MCF 10A (cell line): ENCODE measurements at regions of chr2 and their contacts with region 1.

Region 1: DNA sequence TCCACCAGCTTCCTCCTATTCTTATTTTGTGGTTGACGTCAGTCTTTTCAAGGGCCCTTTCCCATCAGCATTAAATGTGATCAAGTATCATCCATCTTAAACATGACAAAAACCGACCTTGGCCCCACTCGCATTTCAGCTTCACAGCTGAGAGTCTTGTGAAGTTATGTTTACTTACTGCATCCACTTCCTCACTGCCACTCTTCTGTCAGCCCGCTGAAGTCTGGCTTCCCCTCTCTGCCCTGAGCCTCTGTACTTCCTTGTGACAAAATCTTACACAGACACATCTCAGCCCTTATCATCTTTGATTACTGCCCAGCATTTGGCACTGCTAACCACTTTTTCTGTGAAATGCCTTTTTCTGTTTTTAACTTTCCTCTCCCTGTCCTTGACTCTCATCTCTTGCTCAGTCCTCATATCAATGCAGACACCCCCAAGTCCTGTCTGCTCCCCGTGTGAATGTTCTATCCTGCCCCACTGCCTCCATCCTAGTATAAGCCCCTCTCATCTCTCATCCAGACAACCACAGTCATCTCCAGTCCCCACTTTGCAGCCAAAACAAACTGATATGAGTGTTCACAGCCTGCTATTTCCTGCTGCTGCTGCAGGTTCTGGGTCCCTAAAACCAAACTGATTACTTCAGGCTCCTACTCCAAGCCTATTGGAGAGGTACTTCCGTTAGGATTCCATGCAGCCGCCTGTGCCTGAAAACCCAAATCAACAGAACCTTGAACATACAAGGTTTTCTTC is 31.4 kb downstream of the FOSL2 start:
- DNase-seq: no peak
- H3K4me3 Mint-ChIP-seq: no peak overlapping the region
- H3K27ac Mint-ChIP-seq: no peak overlapping the region
- H3K4me1 Mint-ChIP-seq: peaks cover 7% of the 10 kb centered on the region
- H3K27me3 Mint-ChIP-seq: no peaks in the 10 kb centered on the region
- CTCF ChIP-seq: no peak

Region 2: DNA sequence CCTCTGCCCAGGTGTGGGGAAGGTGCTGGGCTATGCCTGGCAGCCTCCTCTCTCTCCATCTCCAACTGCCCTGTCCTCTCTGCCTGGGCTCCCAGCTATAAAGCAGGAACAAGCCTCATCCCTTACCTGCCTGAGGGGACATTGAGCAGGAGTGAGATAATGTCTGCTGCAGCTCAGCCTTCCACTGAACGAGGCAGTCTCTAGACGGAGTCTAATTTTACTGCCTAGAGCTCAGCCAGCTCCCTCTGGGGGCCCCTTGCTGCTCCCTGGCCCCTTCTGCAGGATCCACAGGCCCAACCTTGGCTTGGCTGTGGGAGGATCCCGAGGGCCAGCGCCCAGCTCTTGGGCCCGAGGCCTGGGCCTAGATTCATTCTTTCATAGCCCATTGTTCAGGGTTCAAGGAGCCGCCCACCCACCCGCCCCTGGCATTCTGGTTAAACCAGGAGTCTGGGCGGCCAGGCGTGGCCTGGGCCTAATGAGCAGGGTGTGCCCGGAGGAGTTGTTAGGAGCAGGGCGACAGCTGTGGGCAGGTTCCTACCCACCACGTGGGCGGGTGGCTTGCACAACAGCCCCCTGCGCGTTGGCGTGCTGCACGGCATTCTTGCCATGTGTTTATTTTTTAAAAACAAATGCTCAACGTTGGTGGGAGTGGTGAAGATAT is 13.2 kb after region 1 on chr2:
- CTCF ChIA-PET with region 1: interaction called, 3 read pairs
- POLR2A ChIA-PET with region 1: interaction called, 40 read pairs
- intact Hi-C with region 1: no loop called
- DNase-seq: peak; percentile 92
- H3K4me3 Mint-ChIP-seq: peak overlapping the region; percentile 29
- H3K27ac Mint-ChIP-seq: peak overlapping the region; percentile 67
- H3K4me1 Mint-ChIP-seq: peaks cover 41% of the 10 kb centered on the region
- H3K27me3 Mint-ChIP-seq: no peaks in the 10 kb centered on the region
- CTCF ChIP-seq: no peak

Region 3: GRCh38 chr2:28445448-28446258 is 21.6 kb after region 1 on chr2:
- CTCF ChIA-PET with region 1: interaction called, 3 read pairs
- POLR2A ChIA-PET with region 1: interaction called, 23 read pairs
- intact Hi-C with region 1: no loop called
- DNase-seq: peak; percentile 99
- H3K4me3 Mint-ChIP-seq: peak overlapping the region; percentile 20
- H3K27ac Mint-ChIP-seq: peak overlapping the region; percentile 11
- H3K4me1 Mint-ChIP-seq: peaks cover 54% of the 10 kb centered on the region
- H3K27me3 Mint-ChIP-seq: no peaks in the 10 kb centered on the region
- CTCF ChIP-seq: no peak

Region 4: DNA sequence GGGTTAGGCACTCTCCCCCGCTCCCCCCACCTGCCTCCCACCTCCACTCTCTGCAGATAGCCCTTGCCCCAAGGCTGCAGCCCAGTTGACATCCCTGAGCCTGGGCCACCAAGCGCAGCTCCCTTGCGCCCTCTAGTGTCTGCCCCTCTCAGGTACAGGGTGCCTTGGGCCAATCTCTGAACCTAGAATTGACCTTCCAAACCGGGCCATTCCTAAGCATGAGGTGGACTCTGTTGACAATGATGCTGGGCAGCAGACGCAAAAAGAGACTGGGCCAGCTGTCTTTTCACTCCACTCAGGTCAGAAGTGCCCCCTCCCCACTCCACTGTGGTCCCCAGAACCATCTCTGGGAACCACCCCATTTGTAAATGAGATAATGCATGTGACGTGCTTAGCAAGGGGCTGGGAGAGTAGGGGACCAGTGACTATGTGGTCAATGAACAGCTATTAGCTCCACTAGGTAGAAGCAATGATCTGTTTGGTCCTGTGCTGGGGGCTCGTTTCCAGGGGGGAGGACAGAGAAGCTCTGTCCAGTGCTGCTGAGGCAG is 28.6 kb after region 1 on chr2:
- CTCF ChIA-PET with region 1: interaction called, 5 read pairs
- POLR2A ChIA-PET with region 1: interaction called, 12 read pairs
- intact Hi-C with region 1: no loop called
- DNase-seq: peak; percentile 68
- H3K4me3 Mint-ChIP-seq: no peak overlapping the region
- H3K27ac Mint-ChIP-seq: no peak overlapping the region
- H3K4me1 Mint-ChIP-seq: peaks cover 31% of the 10 kb centered on the region
- H3K27me3 Mint-ChIP-seq: no peaks in the 10 kb centered on the region
- CTCF ChIP-seq: peak; percentile 94

Region 5: GRCh38 chr2:28952816-28953211 is 528.8 kb after region 1 on chr2:
- CTCF ChIA-PET with region 1: no interaction called
- POLR2A ChIA-PET with region 1: no interaction called
- intact Hi-C with region 1: no loop called
- DNase-seq: no peak
- H3K4me3 Mint-ChIP-seq: no peak overlapping the region
- H3K27ac Mint-ChIP-seq: peak overlapping the region; percentile 82
- H3K4me1 Mint-ChIP-seq: peaks cover 44% of the 10 kb centered on the region
- H3K27me3 Mint-ChIP-seq: no peaks in the 10 kb centered on the region
- CTCF ChIP-seq: no peak